CD8-positive, alpha-beta T cell (primary cell): ENCODE measurements at regions of chr2 and their contacts with region 1.

Region 1: GRCh38 chr2:55282110-55282917 is 13.3 kb upstream of the MTIF2 start:
- DNase-seq: peak; percentile 77 to 93 (median 87)
- ATAC-seq: peak; percentile 99
- H3K4me3 ChIP-seq: peak overlapping the region; percentile 62 to 70
- H3K4me3 Mint-ChIP-seq: peak overlapping the region; percentile 94
- H3K27ac ChIP-seq: peak overlapping the region; percentile 72 to 96
- H3K27ac Mint-ChIP-seq: peak overlapping the region; percentile 99
- H3K4me1 ChIP-seq: peaks cover 7% of the 10 kb centered on the region
- H3K4me1 Mint-ChIP-seq: peaks cover 31% of the 10 kb centered on the region
- H3K27me3 ChIP-seq: no peaks in the 10 kb centered on the region
- H3K27me3 Mint-ChIP-seq: no peaks in the 10 kb centered on the region
- CTCF ChIP-seq: no peak

Region 2: DNA sequence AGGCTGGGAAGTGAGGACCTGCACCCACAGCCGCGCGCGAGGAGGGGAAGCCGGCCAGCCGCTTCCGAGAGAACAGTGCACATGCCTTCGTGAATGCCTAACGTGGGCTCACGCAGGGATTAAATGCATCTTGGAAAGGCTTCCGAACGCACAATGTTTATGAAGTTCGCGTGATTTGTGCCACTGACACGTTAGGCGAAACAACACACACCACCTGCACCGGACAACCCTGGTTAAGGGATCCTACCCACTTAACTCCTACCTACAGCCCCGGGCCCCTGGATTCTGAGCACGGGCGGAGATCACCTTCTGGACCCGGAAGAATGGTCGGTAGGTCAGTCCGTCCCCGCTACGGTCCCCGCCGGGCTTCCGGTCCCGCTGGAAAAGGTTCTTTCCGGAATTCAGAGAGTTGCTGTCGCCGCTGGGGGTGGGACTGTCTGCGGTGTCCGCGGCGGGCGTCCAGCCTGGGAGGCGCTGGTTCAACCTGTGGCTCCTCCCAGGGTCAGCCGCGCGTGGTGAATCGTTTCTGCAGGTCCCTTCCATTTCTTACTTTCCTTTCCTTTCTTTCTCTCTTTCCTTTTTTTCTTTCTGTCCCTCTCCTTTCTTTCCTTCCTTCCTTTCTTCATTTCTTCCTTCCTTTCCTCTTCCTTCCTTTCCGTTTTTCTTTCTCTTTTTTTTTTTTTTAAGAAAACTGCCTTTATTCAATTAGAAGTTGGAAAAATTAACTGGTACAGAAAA is 13.2 kb before region 1 on chr2 and contains the start of gene MTIF2:
- CTCF ChIA-PET with region 1: no interaction called
- POLR2A ChIA-PET with region 1: interaction called, 6 read pairs
- intact Hi-C with region 1: loop called (anchors 1 kb)
- DNase-seq: peak; percentile 75 to 93 (median 88)
- ATAC-seq: peak; percentile 83
- H3K4me3 ChIP-seq: peak within 1 kb of the TSS; percentile 61 to 67
- H3K4me3 Mint-ChIP-seq: peak within 1 kb of the TSS; percentile 95
- H3K27ac ChIP-seq: peak within 1 kb of the TSS; percentile 59 to 66
- H3K27ac Mint-ChIP-seq: peak within 1 kb of the TSS; percentile 96
- H3K4me1 ChIP-seq: peaks cover 4% of the 10 kb centered on the region
- H3K4me1 Mint-ChIP-seq: peaks cover 26% of the 10 kb centered on the region
- H3K27me3 ChIP-seq: peaks cover 0 to 2% of the 10 kb centered on the region in 2 experiments
- H3K27me3 Mint-ChIP-seq: no peaks in the 10 kb centered on the region
- CTCF ChIP-seq: no peak
- total RNA-seq, gene MTIF2: 12.2 to 14.4 TPM

Region 3: DNA sequence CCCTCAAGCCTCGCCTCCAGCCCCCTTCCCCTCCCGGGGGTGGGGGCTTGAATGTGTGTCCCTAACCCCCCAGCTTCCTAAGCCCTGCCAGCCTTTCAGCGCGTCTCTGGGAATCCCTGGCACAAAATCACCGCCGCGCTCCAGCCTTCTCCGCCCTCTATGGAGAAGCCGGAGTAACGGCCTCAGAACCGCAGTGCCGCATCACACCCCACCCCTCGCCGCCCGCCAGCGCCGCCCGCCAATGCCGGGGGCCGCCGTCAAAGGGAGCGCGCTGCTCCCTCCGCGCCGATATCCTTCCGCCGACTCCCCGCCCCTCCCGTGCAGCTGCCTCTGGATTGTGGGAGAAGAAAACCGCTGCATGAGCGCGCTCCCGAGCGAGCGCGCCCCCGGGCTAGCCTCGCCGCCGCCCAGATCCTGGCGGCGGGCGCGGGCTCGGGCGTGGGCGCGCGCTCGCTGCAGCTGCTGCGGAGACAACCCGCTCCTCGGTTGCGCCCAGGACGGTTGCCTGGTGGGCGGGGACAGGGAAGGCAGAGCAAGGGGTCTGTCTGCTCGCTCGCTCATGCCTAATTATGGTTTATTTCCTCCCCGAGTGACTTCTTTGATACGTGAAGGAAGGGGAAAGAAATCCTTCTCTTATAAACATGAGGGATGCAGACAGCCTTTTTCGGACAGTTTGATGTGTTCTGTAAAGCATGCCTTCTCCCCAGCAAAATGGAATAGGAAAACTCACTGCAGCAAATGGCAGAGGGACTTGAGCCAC is 137.5 kb after region 1 on chr2 and contains the start of gene CCDC88A:
- CTCF ChIA-PET with region 1: no interaction called
- POLR2A ChIA-PET with region 1: no interaction called
- intact Hi-C with region 1: loop called (anchors 5 kb)
- DNase-seq: peak; percentile 71 to 96 (median 85)
- ATAC-seq: peak; percentile 80
- H3K4me3 ChIP-seq: peak within 1 kb of the TSS; percentile 75 to 93
- H3K4me3 Mint-ChIP-seq: peak within 1 kb of the TSS; percentile 92
- H3K27ac ChIP-seq: peak within 1 kb of the TSS; percentile 57 to 83
- H3K27ac Mint-ChIP-seq: peak within 1 kb of the TSS; percentile 87
- H3K4me1 ChIP-seq: peaks cover 14% of the 10 kb centered on the region
- H3K4me1 Mint-ChIP-seq: peaks cover 38% of the 10 kb centered on the region
- H3K27me3 ChIP-seq: no peaks in the 10 kb centered on the region
- H3K27me3 Mint-ChIP-seq: peaks cover 4% of the 10 kb centered on the region
- CTCF ChIP-seq: no peak
- total RNA-seq, gene CCDC88A: 9.5 to 12.3 TPM

Region 4: GRCh38 chr2:55693181-55694134 is 411.1 kb after region 1 on chr2 and contains the start of gene PNPT1:
- CTCF ChIA-PET with region 1: no interaction called
- POLR2A ChIA-PET with region 1: no interaction called
- intact Hi-C with region 1: loop called (anchors 5 to 10 kb)
- DNase-seq: peak; percentile 84 to 95 (median 92)
- ATAC-seq: peak; percentile 100
- H3K4me3 ChIP-seq: peak within 1 kb of the TSS; percentile 90 to 98
- H3K4me3 Mint-ChIP-seq: peak within 1 kb of the TSS; percentile 98
- H3K27ac ChIP-seq: peak within 1 kb of the TSS; percentile 59 to 66
- H3K27ac Mint-ChIP-seq: peak within 1 kb of the TSS; percentile 93
- H3K4me1 ChIP-seq: peaks cover 12% of the 10 kb centered on the region
- H3K4me1 Mint-ChIP-seq: peaks cover 40% of the 10 kb centered on the region
- H3K27me3 ChIP-seq: no peaks in the 10 kb centered on the region
- H3K27me3 Mint-ChIP-seq: no peaks in the 10 kb centered on the region
- CTCF ChIP-seq: no peak
- total RNA-seq, gene PNPT1: 12.8 to 13.9 TPM